Naive thymus-derived CD4-positive, alpha-beta T cell (primary cell): ENCODE measurements at regions of chr3 and their contacts with region 1.

Region 1: DNA sequence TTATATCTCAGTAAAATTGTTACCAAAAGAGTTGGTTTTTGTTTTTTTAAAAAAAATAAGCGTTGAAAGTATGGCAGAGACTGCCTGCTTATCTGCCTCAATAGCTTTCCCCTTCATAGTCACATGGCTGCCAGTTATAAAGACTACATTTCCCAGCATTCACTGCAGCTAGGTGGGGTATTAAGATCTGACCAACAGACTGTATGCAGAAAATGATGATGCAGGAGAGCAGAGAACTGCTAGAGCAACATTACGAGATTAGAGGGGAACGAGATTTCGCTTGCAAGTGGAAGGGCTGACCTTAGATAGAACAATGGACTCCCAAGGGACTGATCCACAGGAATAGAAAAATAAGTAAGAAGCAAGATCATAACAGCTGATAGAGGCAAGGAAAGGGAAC is 14.3 kb downstream of the RHOA start:
- DNase-seq: no peak
- ATAC-seq: peak; percentile 45
- H3K4me3 ChIP-seq: no peak overlapping the region
- H3K4me3 Mint-ChIP-seq: peak overlapping the region in 4 of 10 donors; percentile 0 to 41 (median 12)
- H3K27ac ChIP-seq: no peak overlapping the region
- H3K27ac Mint-ChIP-seq: peak overlapping the region in 5 of 9 donors; percentile 13 to 66 (median 37)
- H3K4me1 ChIP-seq: peaks cover 7 to 10% of the 10 kb centered on the region in 2 donors
- H3K4me1 Mint-ChIP-seq: peaks cover 50 to 88% (median 73%) of the 10 kb centered on the region in 7 donors
- H3K27me3 ChIP-seq: no peaks in the 10 kb centered on the region
- H3K27me3 Mint-ChIP-seq: no peaks in the 10 kb centered on the region

Region 2: DNA sequence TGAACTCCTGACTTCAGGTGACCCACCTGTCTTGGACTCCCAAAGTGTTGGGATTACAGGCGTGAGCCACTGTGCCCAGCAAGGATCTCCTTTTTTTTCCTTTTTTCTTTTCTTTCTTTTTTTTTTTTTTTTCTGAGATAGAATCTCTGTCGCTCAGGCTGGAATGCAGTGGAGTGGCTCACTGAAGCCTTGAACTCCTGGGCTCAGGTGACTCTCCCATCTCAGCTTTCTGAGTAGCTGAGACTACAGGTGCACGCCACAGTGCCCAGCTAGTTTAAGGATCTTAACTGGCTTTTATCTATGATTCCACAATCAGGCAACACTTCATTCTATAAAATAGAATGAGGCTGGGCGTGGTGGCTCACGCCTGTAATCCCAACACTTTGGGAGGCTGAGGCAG is 47.9 kb after region 1 on chr3:
- CTCF ChIA-PET with region 1: no interaction called
- POLR2A ChIA-PET with region 1: no interaction called
- intact Hi-C with region 1: loop called in 1 of 2 experiments (anchors 10 kb)
- DNase-seq: no peak
- ATAC-seq: no peak
- H3K4me3 ChIP-seq: no peak overlapping the region
- H3K4me3 Mint-ChIP-seq: no peak overlapping the region
- H3K27ac ChIP-seq: no peak overlapping the region
- H3K27ac Mint-ChIP-seq: peak overlapping the region in 3 of 9 donors; percentile 45 to 92 (median 60)
- H3K4me1 ChIP-seq: peaks cover 10 to 15% of the 10 kb centered on the region in 2 donors
- H3K4me1 Mint-ChIP-seq: peaks cover 5 to 25% (median 18%) of the 10 kb centered on the region in 7 donors
- H3K27me3 ChIP-seq: no peaks in the 10 kb centered on the region
- H3K27me3 Mint-ChIP-seq: no peaks in the 10 kb centered on the region